MCF 10A (cell line): ENCODE measurements at regions of chr4 and their contacts with region 1.

Region 1: GRCh38 chr4:78612398-78613178 is 61.0 kb downstream of the ANXA3 start:
- DNase-seq: peak; percentile 68
- H3K4me3 Mint-ChIP-seq: no peak overlapping the region
- H3K27ac Mint-ChIP-seq: no peak overlapping the region
- H3K4me1 Mint-ChIP-seq: no peaks in the 10 kb centered on the region
- H3K27me3 Mint-ChIP-seq: no peaks in the 10 kb centered on the region
- CTCF ChIP-seq: peak; percentile 56

Region 2: DNA sequence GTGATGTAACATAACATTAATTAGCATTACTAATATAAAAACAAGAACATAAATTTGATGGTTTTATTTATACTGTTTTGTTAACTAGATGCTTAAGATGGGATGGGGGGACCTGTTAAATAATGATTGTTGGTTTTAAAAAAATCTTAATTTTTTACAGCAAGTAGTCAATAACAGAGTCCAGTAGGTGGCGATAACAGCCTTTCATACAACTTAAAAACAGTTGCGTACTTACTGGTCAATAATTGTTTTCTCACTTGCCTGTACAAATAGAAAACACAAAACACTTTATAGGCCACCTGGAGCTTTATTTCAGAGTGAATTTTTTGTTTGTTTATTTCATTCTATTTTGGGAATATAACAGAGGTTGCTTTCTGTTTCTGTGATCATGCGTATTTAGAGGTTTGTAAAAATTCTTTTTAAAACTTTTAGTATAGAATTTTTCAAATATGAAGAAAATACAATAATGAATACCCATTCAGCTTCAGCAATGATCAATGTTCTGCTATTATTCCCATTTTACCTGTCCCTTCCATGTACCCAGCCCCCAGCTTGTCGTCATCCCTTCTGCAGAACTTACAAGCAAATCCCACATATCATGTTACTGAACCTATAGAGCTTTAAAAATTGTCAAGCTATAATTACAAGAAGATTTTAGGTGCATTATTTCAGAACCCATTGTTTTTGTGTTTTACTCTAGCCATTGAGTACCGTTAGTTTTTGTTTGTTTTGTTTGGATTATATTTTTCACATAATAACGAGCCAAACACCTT is 652.8 kb before region 1 on chr4:
- CTCF ChIA-PET with region 1: interaction called, 4 read pairs
- POLR2A ChIA-PET with region 1: no interaction called
- intact Hi-C with region 1: loop called (anchors 1 kb)
- DNase-seq: peak; percentile 54
- H3K4me3 Mint-ChIP-seq: no peak overlapping the region
- H3K27ac Mint-ChIP-seq: no peak overlapping the region
- H3K4me1 Mint-ChIP-seq: no peaks in the 10 kb centered on the region
- H3K27me3 Mint-ChIP-seq: no peaks in the 10 kb centered on the region
- CTCF ChIP-seq: peak; percentile 63

Region 3: GRCh38 chr4:78629991-78630541 is 17.5 kb after region 1 on chr4:
- CTCF ChIA-PET with region 1: interaction called, 16 read pairs
- POLR2A ChIA-PET with region 1: no interaction called
- intact Hi-C with region 1: no loop called
- DNase-seq: no peak
- H3K4me3 Mint-ChIP-seq: no peak overlapping the region
- H3K27ac Mint-ChIP-seq: no peak overlapping the region
- H3K4me1 Mint-ChIP-seq: peaks cover 21% of the 10 kb centered on the region
- H3K27me3 Mint-ChIP-seq: no peaks in the 10 kb centered on the region
- CTCF ChIP-seq: no peak